Activated T-helper 2 cell treated with anti-CD3 and anti-CD28 coated beads, Interferon-gamma antibody, Interleukin-2, Interleukin-4, amounts not matched to agents 10 μg/mL and 5 μg/mL and 100 μg/mL, durations not matched to agents 14 hours and 24 hours and 36 hours (primary cell): ENCODE measurements at regions of chr6 and their contacts with region 1.

Region 1: GRCh38 chr6:162181741-162182401 is 545.7 kb downstream of the PRKN start:
- DNase-seq: no peak
- H3K4me3 Mint-ChIP-seq: no peak overlapping the region
- H3K27ac Mint-ChIP-seq: no peak overlapping the region
- H3K4me1 Mint-ChIP-seq: peaks cover 19% of the 10 kb centered on the region
- H3K27me3 Mint-ChIP-seq: no peaks in the 10 kb centered on the region

Region 2: DNA sequence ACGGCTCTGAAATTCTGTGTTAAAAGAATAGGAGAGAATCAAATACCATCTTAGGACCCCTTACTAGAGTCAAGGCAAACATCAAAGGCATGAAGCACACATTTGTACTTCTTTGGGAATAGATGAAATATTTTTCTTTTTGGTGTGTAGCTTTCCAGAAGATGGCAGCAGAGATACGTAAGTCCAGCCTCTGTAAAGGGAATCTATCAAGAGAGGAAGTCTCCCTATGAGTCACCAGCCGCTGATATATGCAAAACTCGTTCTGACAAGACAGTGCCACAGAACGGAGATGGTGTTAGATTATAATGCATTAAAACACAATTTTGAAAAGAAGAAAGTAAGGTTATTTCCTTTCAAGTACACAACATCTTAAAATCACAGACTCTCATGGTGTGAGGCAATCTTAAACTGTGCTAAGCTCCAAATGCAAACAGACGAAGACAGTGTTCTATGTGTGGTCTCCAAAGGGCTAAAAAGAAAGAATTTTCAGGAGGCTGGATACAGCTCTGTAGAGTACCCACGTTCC is 788.0 kb before region 1 on chr6:
- intact Hi-C with region 1: loop called (anchors 5 kb)
- DNase-seq: peak; percentile 48
- H3K4me3 Mint-ChIP-seq: no peak overlapping the region
- H3K27ac Mint-ChIP-seq: no peak overlapping the region
- H3K4me1 Mint-ChIP-seq: no peaks in the 10 kb centered on the region
- H3K27me3 Mint-ChIP-seq: peaks cover 39% of the 10 kb centered on the region